Esophagus muscularis mucosa (tissue), 4 donors: ENCODE measurements at regions of chr7 and their contacts with region 1.

Region 1: GRCh38 chr7:134991469-134992339 is 5.4 kb downstream of the AGBL3 start:
- DNase-seq: no peak
- H3K4me3 ChIP-seq: no peak overlapping the region
- H3K27ac ChIP-seq: peak overlapping the region; percentile 34 to 60 (median 44)
- H3K4me1 ChIP-seq: peaks cover 0 to 78% (median 72%) of the 10 kb centered on the region in 4 donors
- H3K27me3 ChIP-seq: no peaks in the 10 kb centered on the region
- CTCF ChIP-seq: no peak
- EP300 ChIP-seq: no peak
- POLR2A ChIP-seq: no peak

Region 2: GRCh38 chr7:135074085-135074484 is 82.4 kb after region 1 on chr7:
- intact Hi-C with region 1: no loop called
- DNase-seq: no peak
- H3K4me3 ChIP-seq: no peak overlapping the region
- H3K27ac ChIP-seq: no peak overlapping the region
- H3K4me1 ChIP-seq: no peaks in the 10 kb centered on the region
- H3K27me3 ChIP-seq: no peaks in the 10 kb centered on the region
- CTCF ChIP-seq: no peak
- EP300 ChIP-seq: no peak
- POLR2A ChIP-seq: no peak

Region 3: GRCh38 chr7:135121868-135122267 is 130.2 kb after region 1 on chr7:
- intact Hi-C with region 1: no loop called
- DNase-seq: no peak
- H3K4me3 ChIP-seq: no peak overlapping the region
- H3K27ac ChIP-seq: no peak overlapping the region
- H3K4me1 ChIP-seq: no peaks in the 10 kb centered on the region
- H3K27me3 ChIP-seq: no peaks in the 10 kb centered on the region
- CTCF ChIP-seq: no peak
- EP300 ChIP-seq: no peak
- POLR2A ChIP-seq: no peak

Region 4: DNA sequence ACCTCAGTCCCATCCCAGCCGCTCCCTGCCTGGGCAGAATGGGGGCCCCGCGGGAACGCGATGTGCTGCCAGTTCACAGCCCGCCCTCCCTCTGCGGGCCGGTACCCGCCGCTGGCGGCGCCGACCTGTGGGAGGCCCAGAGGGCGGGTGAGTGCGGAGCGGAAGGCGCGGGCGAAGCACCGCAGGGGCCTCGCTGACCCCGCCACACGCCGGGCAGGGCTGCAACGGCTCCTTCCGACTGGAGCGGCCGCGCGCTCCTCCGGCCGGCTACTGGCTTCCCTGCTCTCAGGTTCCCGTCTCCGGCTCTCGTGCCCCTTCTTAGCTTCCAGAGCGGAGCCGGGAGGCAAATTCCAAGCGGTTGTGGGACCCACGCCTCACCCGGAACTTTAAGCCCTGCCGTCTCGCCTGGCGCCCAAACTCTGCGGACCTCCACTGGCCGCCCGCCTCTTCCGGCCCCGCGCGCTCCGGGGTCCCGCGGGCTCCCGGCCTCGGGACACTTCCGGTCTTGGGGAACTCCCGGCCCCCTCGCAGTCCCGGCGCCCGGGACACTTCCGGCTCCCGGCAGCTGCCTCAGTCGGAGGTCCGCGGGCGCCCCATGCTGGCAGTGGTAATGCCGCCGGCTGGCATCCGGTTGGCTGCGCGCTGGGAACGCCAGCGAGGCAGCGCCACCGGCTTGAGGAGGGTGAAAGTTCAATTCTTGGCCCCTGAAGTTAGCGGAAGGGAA is 178.7 kb after region 1 on chr7 and contains the start of gene CYREN:
- intact Hi-C with region 1: loop called (anchors 2 kb)
- DNase-seq: peak; percentile 96
- H3K4me3 ChIP-seq: peak within 1 kb of the TSS; percentile 82 to 88 (median 84)
- H3K27ac ChIP-seq: peak within 1 kb of the TSS; percentile 94 to 98 (median 96)
- H3K4me1 ChIP-seq: peaks cover 57 to 60% (median 60%) of the 10 kb centered on the region in 4 donors
- H3K27me3 ChIP-seq: peaks cover 0 to 4% (median 0%) of the 10 kb centered on the region in 4 donors
- CTCF ChIP-seq: peak; percentile 77 to 90 (median 89)
- EP300 ChIP-seq: no peak
- POLR2A ChIP-seq: peak; percentile 42
- total RNA-seq, gene CYREN: 30.8 to 51.7 (median 40.2) TPM